GM13976 (cell line): ENCODE measurements at regions of chr1 and their contacts with region 1.

Region 1: DNA sequence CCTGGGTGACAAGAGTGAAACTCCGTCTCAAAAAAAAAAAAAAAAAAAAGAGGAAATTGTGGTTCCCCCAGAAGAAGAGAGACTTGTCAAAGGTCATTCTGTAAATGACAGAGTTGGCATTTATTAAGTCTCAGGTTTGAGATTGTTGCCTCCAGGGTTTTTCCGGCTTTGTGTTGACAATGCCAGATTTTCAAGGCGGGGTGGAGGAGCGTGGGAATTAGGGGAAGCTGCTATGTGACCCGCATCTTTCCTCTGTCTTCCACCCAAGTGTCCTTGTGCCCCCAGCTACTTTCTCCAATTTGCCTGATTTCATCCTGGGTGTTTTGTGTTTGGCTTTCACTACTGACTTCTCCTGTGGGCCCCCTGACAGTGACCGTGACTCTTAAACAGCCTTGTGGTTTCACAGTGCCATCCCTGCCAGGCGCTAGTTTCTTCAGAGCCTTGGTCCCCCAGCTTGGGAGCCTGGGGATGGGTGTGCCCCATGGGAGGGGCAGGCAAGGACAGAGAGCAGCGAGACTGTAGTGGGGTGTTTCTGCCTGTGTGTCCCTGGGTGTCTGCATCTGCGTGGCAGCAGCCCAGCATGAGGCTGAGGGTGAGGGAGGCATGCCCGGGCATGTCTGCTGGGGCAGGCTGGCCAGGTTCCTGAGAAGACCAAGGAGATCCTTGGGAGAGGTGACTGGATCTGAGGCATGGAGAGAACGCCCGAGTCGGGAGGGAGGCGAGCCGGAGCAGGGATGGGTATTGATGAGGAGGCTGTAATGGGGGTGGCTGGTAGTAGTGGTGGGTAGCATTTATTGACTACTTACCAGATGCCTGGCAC is 46.3 kb downstream of the IER5 start:
- DNase-seq: peak; percentile 68
- CTCF ChIP-seq: no peak

Region 2: GRCh38 chr1:180672105-180672504 is 462.6 kb before region 1 on chr1:
- in situ Hi-C with region 1: no loop called
- DNase-seq: no peak
- CTCF ChIP-seq: no peak

Region 3: GRCh38 chr1:181089677-181090409 is 44.9 kb before region 1 on chr1:
- in situ Hi-C with region 1: loop called (anchors 5 kb)
- DNase-seq: peak; percentile 68
- CTCF ChIP-seq: no peak

Region 4: GRCh38 chr1:181206513-181206912 is 71.8 kb after region 1 on chr1:
- in situ Hi-C with region 1: no loop called
- DNase-seq: no peak
- CTCF ChIP-seq: no peak

Region 5: GRCh38 chr1:181452754-181453153 is 318.0 kb after region 1 on chr1:
- in situ Hi-C with region 1: no loop called
- DNase-seq: no peak
- CTCF ChIP-seq: no peak